Activated CD8-positive, alpha-beta T cell treated with anti-CD3 and anti-CD28 coated beads, Interleukin-2, amount 10 ng/mL, durations not matched to agents 7 days and 5 days (primary cell): ENCODE measurements at regions of chr19 and their contacts with region 1.

Region 1: DNA sequence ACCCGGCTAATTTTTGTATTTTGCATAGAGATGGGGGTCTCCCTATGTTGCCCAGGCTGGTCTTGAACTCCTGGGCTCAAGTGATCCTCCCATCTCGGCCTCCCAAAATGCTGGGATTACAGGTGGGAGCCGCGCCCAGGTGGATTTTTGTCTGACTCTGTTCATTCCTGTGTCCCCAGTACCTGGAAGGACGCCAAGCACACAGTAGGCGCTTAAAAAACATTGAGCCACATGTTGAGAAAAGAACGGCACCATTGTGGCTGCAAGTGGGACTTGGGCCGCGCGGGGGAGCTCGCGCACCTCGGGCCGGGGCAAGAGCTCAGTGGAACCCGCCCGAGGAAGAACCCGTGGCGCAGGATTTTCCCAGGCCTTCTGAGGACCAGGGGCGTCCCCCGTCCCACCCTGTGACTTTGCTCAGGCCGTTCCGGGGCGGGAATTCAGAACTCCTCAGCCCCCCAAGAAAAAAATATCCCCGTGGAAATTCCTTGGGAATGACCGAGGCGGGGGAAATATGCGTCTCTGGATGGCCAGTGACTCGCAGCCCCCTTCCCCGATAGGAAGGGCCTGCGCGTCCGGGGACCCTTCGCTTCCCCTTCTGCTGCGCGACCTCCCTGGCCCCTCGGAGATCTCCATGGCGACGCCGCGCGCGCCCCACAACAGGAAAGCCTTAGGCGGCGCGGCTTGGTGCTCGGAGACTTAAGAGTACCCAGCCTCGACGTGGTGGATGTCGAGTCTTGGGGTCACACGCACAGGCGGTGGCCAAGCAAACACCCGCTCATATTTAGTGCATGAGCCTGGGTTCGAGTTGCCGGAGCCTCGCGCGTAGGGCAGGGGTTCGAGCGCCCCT is 1.4 kb upstream of the ICAM1 start:
- DNase-seq: peak; percentile 92
- ATAC-seq: peak; percentile 69
- H3K4me3 Mint-ChIP-seq: peak overlapping the region; percentile 82
- H3K27ac Mint-ChIP-seq: peak overlapping the region; percentile 93
- H3K4me1 Mint-ChIP-seq: peaks cover 35% of the 10 kb centered on the region
- H3K27me3 Mint-ChIP-seq: no peaks in the 10 kb centered on the region

Region 2: DNA sequence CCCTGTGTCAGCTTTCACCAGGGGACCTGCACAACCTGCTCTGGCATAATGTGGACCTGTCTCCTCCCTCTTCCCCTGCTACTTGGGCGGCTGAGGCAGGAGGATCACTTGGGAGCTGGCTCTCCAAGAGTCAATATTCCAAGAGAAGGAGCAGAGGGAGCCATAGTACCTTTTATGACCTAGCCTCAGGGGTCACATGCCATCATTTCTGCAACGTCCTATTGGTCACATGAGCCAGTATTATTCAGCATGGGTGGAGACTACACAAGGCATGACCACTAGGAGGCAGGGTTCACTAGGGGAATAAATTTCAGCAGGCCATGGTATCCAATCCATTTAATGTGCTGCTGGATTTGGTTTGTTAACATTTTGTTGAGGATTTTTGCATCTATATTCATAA is 195.4 kb before region 1 on chr19:
- CTCF ChIA-PET with region 1: no interaction called
- POLR2A ChIA-PET with region 1: no interaction called
- DNase-seq: peak; percentile 66
- ATAC-seq: peak; percentile 85
- H3K4me3 Mint-ChIP-seq: no peak overlapping the region
- H3K27ac Mint-ChIP-seq: no peak overlapping the region
- H3K4me1 Mint-ChIP-seq: peaks cover under 1% of the 10 kb centered on the region
- H3K27me3 Mint-ChIP-seq: peaks cover 12% of the 10 kb centered on the region

Region 3: DNA sequence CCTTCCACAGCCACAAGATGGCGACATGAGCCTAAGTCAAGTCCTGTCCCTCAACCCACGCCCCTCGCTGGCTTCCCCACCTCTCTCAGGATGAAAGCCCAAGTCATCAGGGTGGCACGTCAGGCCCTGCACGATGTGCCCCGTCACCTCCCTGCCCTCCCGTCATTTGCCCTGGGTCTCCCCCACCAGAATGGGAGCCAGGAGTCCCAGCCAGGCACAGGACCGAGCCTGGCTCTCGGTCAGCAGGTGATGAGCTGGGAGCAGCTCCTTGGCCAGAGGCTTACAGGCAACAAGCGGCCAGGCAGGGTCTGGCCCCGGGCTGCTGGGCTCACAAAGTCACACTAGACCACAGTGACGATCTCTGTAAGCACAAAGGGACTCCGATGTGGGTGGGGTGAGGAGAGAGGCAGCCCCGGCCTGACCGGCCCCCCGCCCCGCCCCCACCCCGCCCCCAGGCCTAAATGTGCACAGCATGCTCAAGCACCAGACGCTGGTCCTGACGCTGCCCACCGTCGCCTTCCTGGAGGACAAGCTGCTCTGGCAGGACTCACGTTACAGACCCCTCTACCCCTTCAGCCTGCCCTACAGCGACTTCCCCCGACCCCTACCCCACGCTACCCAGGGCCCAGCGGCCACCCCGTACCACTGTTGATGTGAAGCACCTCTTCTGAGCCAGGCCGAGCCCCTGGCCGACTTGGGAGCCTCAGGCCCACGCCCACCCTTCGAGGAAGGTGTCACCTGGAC is 10.2 kb before region 1 on chr19:
- CTCF ChIA-PET with region 1: interaction called, 96 read pairs
- POLR2A ChIA-PET with region 1: interaction called, 26 read pairs
- DNase-seq: peak; percentile 94
- ATAC-seq: peak; percentile 81
- H3K4me3 Mint-ChIP-seq: no peak overlapping the region
- H3K27ac Mint-ChIP-seq: no peak overlapping the region
- H3K4me1 Mint-ChIP-seq: peaks cover 27% of the 10 kb centered on the region
- H3K27me3 Mint-ChIP-seq: no peaks in the 10 kb centered on the region

Region 4: DNA sequence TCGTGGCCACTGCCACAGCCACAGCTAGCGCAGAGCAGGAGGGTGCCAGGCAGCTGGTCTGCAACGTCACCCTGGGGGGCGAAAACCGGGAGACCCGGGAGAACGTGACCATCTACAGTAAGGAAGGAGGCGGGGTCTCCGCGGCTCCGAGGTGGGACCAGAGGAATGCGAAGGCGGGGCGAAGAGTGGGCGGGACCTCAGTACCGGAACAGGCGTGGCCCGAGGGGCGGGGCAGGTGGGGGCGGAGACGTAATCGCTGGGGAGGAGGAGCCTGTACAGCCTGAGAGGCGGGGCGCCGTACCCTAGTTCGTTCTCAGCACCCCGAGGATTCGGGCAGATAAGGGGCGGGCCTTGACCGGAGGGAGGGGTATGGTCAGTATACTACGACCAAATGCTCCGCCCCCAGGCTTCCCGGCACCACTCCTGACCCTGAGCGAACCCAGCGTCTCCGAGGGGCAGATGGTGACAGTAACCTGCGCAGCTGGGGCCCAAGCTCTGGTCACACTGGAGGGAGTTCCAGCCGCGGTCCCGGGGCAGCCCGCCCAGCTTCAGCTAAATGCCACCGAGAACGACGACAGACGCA is 22.7 kb after region 1 on chr19:
- CTCF ChIA-PET with region 1: interaction called, 40 read pairs
- POLR2A ChIA-PET with region 1: interaction called, 54 read pairs
- DNase-seq: peak; percentile 81
- ATAC-seq: peak; percentile 28
- H3K4me3 Mint-ChIP-seq: peak overlapping the region; percentile 73
- H3K27ac Mint-ChIP-seq: peak overlapping the region; percentile 70
- H3K4me1 Mint-ChIP-seq: peaks cover 81% of the 10 kb centered on the region
- H3K27me3 Mint-ChIP-seq: peaks cover 77% of the 10 kb centered on the region

Region 5: DNA sequence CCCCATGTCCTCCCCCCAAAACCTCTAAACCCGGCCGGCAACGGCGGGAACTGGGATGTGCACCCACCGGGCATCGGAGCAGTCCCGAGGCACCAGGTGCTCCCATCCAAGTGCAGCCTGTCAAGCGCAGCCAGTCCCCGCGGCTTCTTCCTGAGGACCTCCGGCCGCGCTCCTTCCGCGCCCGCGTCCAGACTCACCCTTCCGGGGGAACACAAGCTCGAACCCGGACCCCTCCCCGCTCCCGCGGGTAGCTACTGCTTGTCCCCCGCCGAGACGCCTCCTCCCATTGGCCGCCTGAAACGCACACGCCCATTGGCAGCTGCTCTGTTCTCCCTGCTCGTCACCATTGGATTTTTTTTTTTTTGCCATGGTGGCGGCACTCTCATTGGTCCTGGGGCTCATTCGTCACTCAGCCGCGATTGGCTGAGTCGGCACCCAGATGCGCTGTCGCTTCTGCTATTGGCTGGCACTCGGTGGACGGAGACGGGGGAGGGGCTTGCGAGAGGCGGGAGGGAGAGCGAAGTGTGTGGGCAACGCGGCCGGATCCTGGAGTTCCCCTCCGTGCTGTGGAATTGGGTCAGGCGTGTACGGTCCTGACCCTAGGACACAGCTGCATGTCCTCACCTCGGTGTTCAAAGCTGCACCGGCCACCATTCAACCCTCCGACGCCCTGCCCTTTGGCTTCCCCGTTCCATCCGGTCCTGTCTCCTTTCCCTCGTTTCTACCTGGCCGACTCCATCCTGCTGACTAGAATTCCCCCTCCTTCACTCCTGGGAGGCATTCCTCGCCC is 111.0 kb after region 1 on chr19 and contains the start of gene TYK2:
- CTCF ChIA-PET with region 1: interaction called, 383 read pairs
- POLR2A ChIA-PET with region 1: interaction called, 29 read pairs
- DNase-seq: peak; percentile 97
- ATAC-seq: peak; percentile 97
- H3K4me3 Mint-ChIP-seq: peak within 1 kb of the TSS; percentile 89
- H3K27ac Mint-ChIP-seq: peak within 1 kb of the TSS; percentile 91
- H3K4me1 Mint-ChIP-seq: peaks cover 26% of the 10 kb centered on the region
- H3K27me3 Mint-ChIP-seq: no peaks in the 10 kb centered on the region
- total RNA-seq, gene TYK2: 216 to 240 TPM

Region 6: DNA sequence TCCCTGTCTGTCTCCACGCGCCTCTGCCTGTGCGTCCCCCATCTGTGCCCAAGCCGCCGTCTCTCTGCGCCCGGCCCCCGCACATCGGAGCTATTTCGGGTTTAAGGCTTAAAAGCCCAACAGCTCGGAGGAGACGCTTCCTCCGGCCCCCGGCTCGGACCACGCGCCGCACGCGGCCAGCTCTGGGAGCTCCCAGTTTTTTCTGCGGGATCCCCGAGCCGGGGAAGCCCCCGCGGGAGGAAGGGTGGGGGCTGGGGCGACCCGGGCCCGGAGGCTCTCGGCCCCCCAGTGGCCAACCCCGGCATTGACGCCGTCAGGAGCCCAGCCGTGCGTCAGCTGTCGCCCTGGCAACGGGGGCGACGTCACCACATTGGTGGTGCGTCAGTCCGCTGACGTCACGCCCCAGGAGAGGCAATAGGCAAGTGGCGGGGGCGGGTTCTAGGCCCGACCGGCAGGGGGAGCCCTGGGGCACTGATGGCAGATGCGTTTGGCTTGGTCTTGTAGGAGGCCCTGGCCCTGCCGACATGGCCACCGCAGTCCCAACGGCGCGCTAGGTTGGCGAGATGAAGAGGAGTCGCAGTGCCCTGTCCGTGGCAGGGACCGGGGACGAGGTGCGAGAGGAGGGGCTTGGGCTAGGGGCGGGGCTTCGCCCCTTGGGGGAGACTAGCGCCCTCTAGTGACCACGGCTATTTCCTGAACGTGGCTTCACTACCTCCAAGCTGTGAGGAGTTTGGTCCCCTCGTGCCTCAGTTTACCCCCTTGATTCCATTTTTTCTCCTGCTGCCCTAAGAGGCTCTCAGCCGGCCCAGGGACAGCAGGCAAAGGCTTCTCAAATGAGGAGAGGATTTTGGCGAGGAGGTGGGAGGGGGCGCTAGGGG is 147.1 kb after region 1 on chr19:
- CTCF ChIA-PET with region 1: interaction called, 20 read pairs
- POLR2A ChIA-PET with region 1: interaction called, 6 read pairs
- DNase-seq: peak; percentile 96
- ATAC-seq: peak; percentile 45
- H3K4me3 Mint-ChIP-seq: peak overlapping the region; percentile 75
- H3K27ac Mint-ChIP-seq: peak overlapping the region; percentile 92
- H3K4me1 Mint-ChIP-seq: peaks cover 66% of the 10 kb centered on the region
- H3K27me3 Mint-ChIP-seq: no peaks in the 10 kb centered on the region